AG04449 (cell line): ENCODE measurements at regions of chr6 and their contacts with region 1.

Region 1: DNA sequence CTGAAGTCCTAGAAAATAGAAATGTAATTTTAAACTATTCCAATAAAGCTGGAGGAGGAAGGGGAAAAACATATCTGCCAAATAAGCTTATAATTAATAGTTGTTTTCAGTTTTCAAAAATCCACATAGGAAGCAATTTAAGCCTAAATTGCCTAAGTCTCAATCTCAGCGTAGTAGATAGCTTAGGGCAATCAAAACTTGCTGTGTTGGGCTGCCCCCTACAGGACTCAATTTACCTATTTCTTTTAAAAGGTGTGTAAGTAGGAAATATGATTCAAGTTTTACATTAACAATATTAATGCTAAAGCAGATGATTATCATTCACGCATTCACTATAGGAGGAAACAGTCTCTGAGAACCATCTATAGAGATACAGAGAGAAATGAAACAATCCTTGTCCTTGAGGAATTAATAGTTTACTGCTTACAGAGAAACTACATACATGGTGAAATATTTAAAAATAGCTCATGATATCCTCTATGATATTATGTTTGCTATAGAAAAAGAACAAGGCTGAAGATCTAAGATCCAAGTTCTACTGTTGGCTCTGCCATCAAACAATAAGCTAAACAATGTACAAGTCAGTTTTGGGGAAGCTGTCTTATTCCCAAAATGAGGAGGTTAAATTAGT is 102.1 kb downstream of the ATG5 start:
- DNase-seq: peak; percentile 37
- H3K4me3 ChIP-seq: no peak overlapping the region
- CTCF ChIP-seq: peak; percentile 47

Region 2: GRCh38 chr6:105484238-105485161 is 738.9 kb before region 1 on chr6:
- CTCF ChIA-PET with region 1: interaction called, 13 read pairs
- POLR2A ChIA-PET with region 1: no interaction called
- DNase-seq: no peak
- H3K4me3 ChIP-seq: no peak overlapping the region
- CTCF ChIP-seq: peak; percentile 49

Region 3: DNA sequence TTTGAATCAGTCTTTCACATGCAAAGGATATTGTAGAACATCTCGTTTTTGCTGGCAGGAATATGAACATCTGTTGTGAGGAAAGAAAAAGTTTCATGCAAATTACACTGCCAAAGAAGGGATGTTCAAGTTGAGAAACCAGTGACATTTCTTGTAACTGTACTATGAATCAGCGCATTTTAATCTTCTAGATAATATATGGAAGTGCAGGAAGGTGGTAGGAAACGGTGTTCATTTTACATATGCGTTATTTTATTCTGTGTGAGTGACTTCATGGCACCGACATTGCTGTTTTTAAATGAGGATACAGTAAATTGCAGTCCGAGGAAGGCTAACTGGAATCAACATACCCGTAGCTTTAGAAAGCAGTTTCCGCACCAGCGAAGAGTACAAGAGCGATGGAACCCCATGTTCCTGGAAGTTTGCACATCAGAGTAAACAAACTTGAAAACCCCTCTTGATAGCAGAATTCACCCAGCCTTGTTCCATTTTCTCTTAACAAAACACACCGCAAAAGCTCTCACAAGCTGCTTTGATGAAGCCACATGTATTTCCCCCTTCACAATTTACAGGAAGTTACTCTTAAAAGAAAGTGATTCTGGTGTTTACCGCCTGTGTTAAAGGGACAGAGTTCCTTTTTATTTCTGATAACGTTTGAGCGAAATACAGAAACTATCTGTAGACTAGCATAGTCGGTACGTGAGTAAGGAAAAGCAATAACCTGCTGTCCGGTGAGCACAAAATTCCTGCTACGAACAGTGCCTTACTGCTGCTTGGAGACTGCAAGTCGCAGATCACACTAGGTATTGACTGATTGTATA is 125.8 kb before region 1 on chr6:
- CTCF ChIA-PET with region 1: interaction called, 99 read pairs
- POLR2A ChIA-PET with region 1: no interaction called
- DNase-seq: no peak
- H3K4me3 ChIP-seq: peak overlapping the region; percentile 53
- CTCF ChIP-seq: no peak

Region 4: DNA sequence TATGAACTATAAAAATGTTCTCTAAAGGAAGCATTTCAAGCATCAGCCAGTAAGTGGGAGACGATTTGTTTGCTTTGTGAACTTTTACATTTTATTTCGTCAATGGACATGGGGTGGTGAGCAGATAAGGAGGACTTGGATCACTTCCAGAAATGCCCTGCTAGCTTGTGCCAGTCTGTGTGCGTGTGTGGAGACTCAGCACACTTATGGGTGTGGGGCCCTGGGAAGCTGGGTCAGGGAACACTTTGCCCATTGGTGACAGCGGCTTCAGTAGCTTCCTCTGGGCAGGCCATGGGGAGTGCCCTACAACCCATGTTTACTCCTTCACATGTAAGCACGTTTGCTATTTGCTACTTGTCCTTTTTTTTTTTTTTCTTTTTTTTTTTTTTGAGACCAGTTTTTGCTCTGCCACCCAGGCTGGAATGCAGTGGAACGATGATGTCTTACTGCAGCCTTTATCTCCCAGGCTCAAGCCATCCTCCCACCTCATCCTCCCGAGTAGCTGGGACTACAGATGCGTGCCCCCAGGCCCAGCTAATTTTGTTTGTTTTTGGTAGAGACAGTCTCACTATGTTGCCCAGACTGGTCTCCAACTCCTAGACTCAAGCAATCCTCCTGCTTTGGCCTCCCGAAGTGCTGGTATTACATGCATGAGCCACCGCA is 113.1 kb before region 1 on chr6:
- CTCF ChIA-PET with region 1: interaction called, 14 read pairs
- POLR2A ChIA-PET with region 1: no interaction called
- DNase-seq: no peak
- H3K4me3 ChIP-seq: no peak overlapping the region
- CTCF ChIP-seq: no peak

Region 5: DNA sequence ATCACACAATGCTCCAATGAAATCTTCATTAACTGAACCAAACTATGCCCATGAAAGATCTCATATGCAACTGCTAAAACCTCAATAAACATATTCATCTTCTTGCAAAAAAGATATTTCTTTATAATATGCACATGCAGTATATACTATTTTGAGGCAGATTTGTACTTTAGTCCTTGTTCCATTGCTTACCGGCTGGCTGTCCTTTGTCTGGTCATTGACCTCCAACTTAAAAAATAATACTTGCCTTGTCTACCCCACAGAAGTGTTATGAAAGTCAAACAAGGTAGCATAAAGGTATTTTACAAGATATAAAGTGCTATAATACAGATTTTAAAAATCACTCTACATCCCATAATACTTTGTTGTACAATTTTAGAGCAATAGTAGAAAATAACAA is 13.9 kb after region 1 on chr6:
- CTCF ChIA-PET with region 1: interaction called, 18 read pairs
- POLR2A ChIA-PET with region 1: no interaction called
- DNase-seq: no peak
- H3K4me3 ChIP-seq: no peak overlapping the region
- CTCF ChIP-seq: no peak